PC-3 (cell line): ENCODE measurements at regions of chr2 and their contacts with region 1.

Region 1: DNA sequence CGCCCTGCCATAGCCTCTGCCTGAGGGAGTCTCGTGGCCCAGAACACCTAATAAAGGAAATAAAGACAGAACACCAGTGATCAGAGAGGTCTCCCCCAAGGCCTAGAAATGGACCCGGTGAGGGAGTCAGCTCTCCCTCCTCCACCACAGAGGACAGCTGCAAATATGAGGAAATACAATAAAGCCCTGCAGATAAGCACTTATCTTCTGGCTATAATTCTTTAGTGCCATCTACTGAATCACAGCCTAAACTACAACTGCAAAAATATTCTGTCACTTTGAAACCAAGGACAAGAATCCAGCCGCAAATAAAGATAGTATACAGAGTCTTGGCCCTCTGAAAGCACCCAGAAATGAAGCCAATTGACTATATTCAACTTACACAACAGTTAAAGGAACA is 42.4 kb upstream of the TACR1 start:
- DNase-seq: peak; percentile 66
- ATAC-seq: peak; percentile 63
- H3K4me3 ChIP-seq: no peak overlapping the region
- H3K27ac ChIP-seq: no peak overlapping the region
- H3K4me1 ChIP-seq: peaks cover 19% of the 10 kb centered on the region
- H3K27me3 ChIP-seq: no peaks in the 10 kb centered on the region
- CTCF ChIP-seq: peak; percentile 82

Region 2: DNA sequence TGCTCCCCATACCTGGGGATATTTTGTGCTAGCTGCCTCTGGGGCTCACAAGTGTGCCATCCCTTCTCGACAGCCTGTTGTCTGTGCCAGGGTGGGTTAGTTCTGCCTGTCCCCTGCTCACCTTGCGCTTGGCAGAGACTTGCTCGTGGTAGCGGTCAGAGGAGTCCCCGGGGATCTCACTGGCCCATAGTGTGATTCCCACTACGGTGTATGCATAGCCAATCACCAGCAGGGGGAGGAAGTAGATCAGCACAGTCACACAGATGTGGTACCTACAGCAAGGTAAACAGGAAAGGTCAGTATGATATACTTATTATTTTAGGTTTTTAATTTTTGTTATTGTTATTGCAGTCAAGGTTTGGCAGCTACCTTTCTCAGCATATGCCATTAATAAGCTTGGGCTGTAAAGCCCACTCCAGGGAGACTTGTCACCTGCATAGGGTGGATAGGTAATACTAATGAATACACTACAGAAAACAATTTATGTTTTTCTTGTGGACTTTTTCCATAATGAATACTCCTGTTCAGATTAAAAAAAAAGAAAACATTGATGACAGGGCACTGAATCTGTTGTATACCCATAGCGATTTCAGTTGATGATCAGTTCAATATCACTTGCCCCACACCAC is 188.1 kb before region 1 on chr2:
- CTCF ChIA-PET with region 1: no interaction called
- POLR2A ChIA-PET with region 1: no interaction called
- intact Hi-C with region 1: loop called (anchors 1 kb)
- DNase-seq: peak; percentile 77
- ATAC-seq: peak; percentile 100
- H3K4me3 ChIP-seq: no peak overlapping the region
- H3K27ac ChIP-seq: no peak overlapping the region
- H3K4me1 ChIP-seq: no peaks in the 10 kb centered on the region
- H3K27me3 ChIP-seq: no peaks in the 10 kb centered on the region
- CTCF ChIP-seq: peak; percentile 90

Region 3: GRCh38 chr2:75064691-75065396 is 176.9 kb before region 1 on chr2:
- CTCF ChIA-PET with region 1: no interaction called
- POLR2A ChIA-PET with region 1: no interaction called
- intact Hi-C with region 1: loop called (anchors 2 kb)
- DNase-seq: peak; percentile 72
- ATAC-seq: peak; percentile 86
- H3K4me3 ChIP-seq: no peak overlapping the region
- H3K27ac ChIP-seq: no peak overlapping the region
- H3K4me1 ChIP-seq: no peaks in the 10 kb centered on the region
- H3K27me3 ChIP-seq: no peaks in the 10 kb centered on the region
- CTCF ChIP-seq: peak; percentile 97

Region 4: GRCh38 chr2:75157430-75157829 is 84.3 kb before region 1 on chr2:
- CTCF ChIA-PET with region 1: no interaction called
- POLR2A ChIA-PET with region 1: no interaction called
- intact Hi-C with region 1: loop called (anchors 2 kb)
- DNase-seq: peak; percentile 60
- ATAC-seq: peak; percentile 67
- H3K4me3 ChIP-seq: no peak overlapping the region
- H3K27ac ChIP-seq: no peak overlapping the region
- H3K4me1 ChIP-seq: peaks cover 17% of the 10 kb centered on the region
- H3K27me3 ChIP-seq: peaks cover 2% of the 10 kb centered on the region; the same call in 1 of the 2 replicates
- CTCF ChIP-seq: peak; percentile 68

Region 5: GRCh38 chr2:75416420-75417342 is 175.0 kb after region 1 on chr2:
- CTCF ChIA-PET with region 1: no interaction called
- POLR2A ChIA-PET with region 1: no interaction called
- intact Hi-C with region 1: no loop called
- DNase-seq: no peak
- ATAC-seq: no peak
- H3K4me3 ChIP-seq: no peak overlapping the region
- H3K27ac ChIP-seq: no peak overlapping the region
- H3K4me1 ChIP-seq: no peaks in the 10 kb centered on the region
- H3K27me3 ChIP-seq: peaks cover 67% of the 10 kb centered on the region
- CTCF ChIP-seq: no peak